PC-9 (cell line): ENCODE measurements at regions of chr19 and their contacts with region 1.

Region 1: GRCh38 chr19:55494172-55494761 is 6.0 kb downstream of the SSC5D start:
- DNase-seq: no peak
- H3K4me3 ChIP-seq: no peak overlapping the region
- H3K27ac ChIP-seq: no peak overlapping the region
- H3K4me1 ChIP-seq: peaks cover 13% of the 10 kb centered on the region
- H3K27me3 ChIP-seq: peaks cover 15% of the 10 kb centered on the region
- CTCF ChIP-seq: no peak

Region 2: DNA sequence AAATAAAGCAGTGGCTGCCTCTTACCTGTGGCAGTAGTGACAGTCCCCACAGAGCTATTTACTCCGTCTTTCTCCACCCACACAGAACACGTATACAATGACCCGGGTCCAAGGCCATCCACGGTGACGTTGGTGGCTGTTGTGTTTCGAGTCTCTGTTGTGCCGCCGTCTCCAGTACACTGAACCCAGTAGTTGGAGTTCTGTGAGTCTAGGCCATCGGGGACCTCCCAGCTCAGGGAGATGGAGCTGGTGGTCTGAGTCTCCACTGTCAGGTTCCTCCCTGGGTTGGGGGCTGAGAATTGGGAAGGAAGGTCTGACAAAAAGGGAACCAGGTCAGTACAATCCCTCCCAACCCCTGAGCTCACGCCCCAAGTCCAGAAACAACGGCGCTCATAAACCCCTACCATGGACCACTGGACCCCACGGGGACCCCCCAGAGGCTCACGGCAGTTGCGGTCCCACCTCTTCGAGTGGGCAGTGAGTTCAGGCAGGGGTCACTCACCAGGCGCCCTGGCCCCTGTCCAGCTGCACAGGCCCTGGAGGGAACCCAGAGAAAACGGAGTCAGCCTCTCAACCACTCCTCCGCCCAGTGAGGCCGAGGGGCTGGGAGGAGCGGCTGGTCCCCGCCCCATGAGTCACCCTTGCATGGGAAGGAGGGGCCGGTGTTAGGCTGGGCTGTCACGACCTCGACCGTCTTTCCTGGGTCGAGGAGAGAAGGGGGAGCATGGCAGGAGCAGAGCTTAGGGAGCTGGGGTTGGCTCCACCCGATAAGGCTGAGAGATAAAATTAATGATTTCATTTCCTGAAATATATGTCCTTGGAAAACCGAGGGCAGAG is 287.4 kb before region 1 on chr19:
- CTCF ChIA-PET with region 1: no interaction called
- POLR2A ChIA-PET with region 1: no interaction called
- intact Hi-C with region 1: no loop called
- DNase-seq: peak; percentile 89 to 95
- H3K4me3 ChIP-seq: peak overlapping the region; percentile 24; the same call in 1 of the 2 replicates
- H3K27ac ChIP-seq: peak overlapping the region; percentile 80
- H3K4me1 ChIP-seq: peaks cover 40% of the 10 kb centered on the region
- H3K27me3 ChIP-seq: no peaks in the 10 kb centered on the region
- CTCF ChIP-seq: no peak

Region 3: GRCh38 chr19:55418185-55418584 is 76.1 kb before region 1 on chr19:
- CTCF ChIA-PET with region 1: no interaction called
- POLR2A ChIA-PET with region 1: interaction called, 16 read pairs
- intact Hi-C with region 1: no loop called
- DNase-seq: peak; percentile 74 to 79
- H3K4me3 ChIP-seq: no peak overlapping the region
- H3K27ac ChIP-seq: no peak overlapping the region
- H3K4me1 ChIP-seq: no peaks in the 10 kb centered on the region
- H3K27me3 ChIP-seq: peaks cover 33% of the 10 kb centered on the region
- CTCF ChIP-seq: peak; percentile 94

Region 4: DNA sequence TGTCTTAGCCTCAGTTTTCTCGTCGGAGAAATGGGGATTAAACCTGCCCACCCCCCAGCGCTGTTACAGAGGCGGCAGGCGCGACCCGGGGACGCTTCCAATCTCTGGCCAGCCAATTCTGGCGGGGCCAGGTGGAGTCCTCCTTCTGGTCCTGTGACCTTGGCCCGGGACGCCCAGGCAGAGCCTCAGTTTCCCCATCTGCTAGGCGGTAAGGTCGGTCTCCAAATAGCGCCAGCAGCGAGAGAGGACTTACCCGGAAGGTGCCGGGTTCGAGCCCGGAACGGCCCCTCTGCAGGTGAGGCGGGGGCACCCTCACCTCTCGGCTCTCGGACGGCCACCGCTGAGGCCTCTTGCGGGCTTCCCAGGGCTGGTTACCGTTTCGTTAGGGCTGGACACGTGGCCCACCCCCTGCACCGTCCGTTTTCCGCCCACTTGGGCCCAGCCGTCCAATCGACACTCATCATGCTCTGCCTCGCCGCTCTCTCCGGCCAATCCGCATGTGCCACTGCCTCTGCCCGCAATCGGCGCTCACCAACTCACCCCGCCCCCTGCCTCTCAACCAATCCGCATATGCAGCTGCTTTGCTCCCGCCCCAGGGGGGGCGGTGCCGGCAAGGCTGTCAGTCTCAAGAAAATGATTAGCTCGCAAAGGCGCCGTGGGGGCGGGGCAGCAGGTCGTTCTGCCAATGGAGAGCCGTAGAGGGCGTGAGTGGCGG is 32.9 kb before region 1 on chr19 and contains the start of gene ISOC2:
- CTCF ChIA-PET with region 1: no interaction called
- POLR2A ChIA-PET with region 1: no interaction called
- intact Hi-C with region 1: loop called (anchors 5 kb)
- DNase-seq: peak; percentile 99 to 100
- H3K4me3 ChIP-seq: peak within 1 kb of the TSS; percentile 90
- H3K27ac ChIP-seq: peak within 1 kb of the TSS; percentile 68
- H3K4me1 ChIP-seq: peaks cover 12% of the 10 kb centered on the region
- H3K27me3 ChIP-seq: no peaks in the 10 kb centered on the region
- CTCF ChIP-seq: no peak
- total RNA-seq, gene ISOC2: 92.4 and 113 TPM in 2 replicates

Region 5: GRCh38 chr19:55563261-55563690 is 69.0 kb after region 1 on chr19:
- CTCF ChIA-PET with region 1: no interaction called
- POLR2A ChIA-PET with region 1: no interaction called
- intact Hi-C with region 1: no loop called
- DNase-seq: no peak
- H3K4me3 ChIP-seq: no peak overlapping the region
- H3K27ac ChIP-seq: no peak overlapping the region
- H3K4me1 ChIP-seq: no peaks in the 10 kb centered on the region
- H3K27me3 ChIP-seq: no peaks in the 10 kb centered on the region
- CTCF ChIP-seq: no peak

Region 6: GRCh38 chr19:57262044-57262443 is 1767.8 kb after region 1 on chr19:
- CTCF ChIA-PET with region 1: interaction called, 12 read pairs
- POLR2A ChIA-PET with region 1: no interaction called
- intact Hi-C with region 1: no loop called
- DNase-seq: no peak
- H3K4me3 ChIP-seq: no peak overlapping the region
- H3K27ac ChIP-seq: no peak overlapping the region
- H3K4me1 ChIP-seq: no peaks in the 10 kb centered on the region
- H3K27me3 ChIP-seq: no peaks in the 10 kb centered on the region
- CTCF ChIP-seq: no peak